ENCODE measurements at regions of chr15 and their contacts with region 1.

Region 1: GRCh38 chr15:41194444-41194843 is 36.1 kb downstream of the EXD1 start:
- DNase-seq: no peak
- ATAC-seq: no peak
- H3K4me3 ChIP-seq: no peak overlapping the region
- H3K4me3 Mint-ChIP-seq: no peak overlapping the region
- H3K27ac ChIP-seq: no peak overlapping the region
- H3K27ac Mint-ChIP-seq: no peak overlapping the region
- H3K4me1 ChIP-seq: no peaks in the 10 kb centered on the region
- H3K4me1 Mint-ChIP-seq: no peaks in the 10 kb centered on the region
- H3K27me3 ChIP-seq: no peaks in the 10 kb centered on the region
- H3K27me3 Mint-ChIP-seq: no peaks in the 10 kb centered on the region
- CTCF ChIP-seq: no peak

Region 2: DNA sequence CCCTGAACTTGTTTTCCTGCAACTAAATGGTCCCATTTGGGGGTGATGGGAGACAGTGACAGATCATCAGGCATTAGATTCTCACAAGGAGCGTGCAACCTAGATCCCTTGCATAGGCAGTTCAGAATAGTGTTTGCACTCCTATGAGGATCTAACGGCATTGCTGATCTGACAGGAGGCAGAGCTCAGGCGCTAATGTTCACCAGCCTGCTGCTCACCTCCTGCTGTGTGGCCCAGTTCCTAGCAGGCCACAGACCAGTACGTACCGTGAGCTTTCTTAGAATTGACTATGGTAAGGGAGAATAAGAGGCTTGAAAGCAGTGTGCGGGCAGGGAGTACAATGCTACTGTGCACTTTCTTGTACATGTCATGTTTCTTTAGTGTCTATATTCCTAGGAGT is 844.0 kb after region 1 on chr15:
- CTCF ChIA-PET with region 1: no interaction called
- POLR2A ChIA-PET with region 1: interaction called, 16 read pairs
- intact Hi-C with region 1: no loop called
- DNase-seq: no peak
- ATAC-seq: no peak
- H3K4me3 ChIP-seq: no peak overlapping the region
- H3K4me3 Mint-ChIP-seq: no peak overlapping the region
- H3K27ac ChIP-seq: no peak overlapping the region
- H3K27ac Mint-ChIP-seq: no peak overlapping the region
- H3K4me1 ChIP-seq: peaks cover 16 to 30% of the 10 kb centered on the region in 2 donors
- H3K4me1 Mint-ChIP-seq: peaks cover 24% of the 10 kb centered on the region
- H3K27me3 ChIP-seq: peaks cover 0 to 3% (median 0%) of the 10 kb centered on the region in 4 experiments
- H3K27me3 Mint-ChIP-seq: peaks cover 4% of the 10 kb centered on the region
- CTCF ChIP-seq: no peak

Measured in B cell (primary cell).